HepG2 (cell line): ENCODE measurements at regions of chr22 and their contacts with region 1.

Region 1: DNA sequence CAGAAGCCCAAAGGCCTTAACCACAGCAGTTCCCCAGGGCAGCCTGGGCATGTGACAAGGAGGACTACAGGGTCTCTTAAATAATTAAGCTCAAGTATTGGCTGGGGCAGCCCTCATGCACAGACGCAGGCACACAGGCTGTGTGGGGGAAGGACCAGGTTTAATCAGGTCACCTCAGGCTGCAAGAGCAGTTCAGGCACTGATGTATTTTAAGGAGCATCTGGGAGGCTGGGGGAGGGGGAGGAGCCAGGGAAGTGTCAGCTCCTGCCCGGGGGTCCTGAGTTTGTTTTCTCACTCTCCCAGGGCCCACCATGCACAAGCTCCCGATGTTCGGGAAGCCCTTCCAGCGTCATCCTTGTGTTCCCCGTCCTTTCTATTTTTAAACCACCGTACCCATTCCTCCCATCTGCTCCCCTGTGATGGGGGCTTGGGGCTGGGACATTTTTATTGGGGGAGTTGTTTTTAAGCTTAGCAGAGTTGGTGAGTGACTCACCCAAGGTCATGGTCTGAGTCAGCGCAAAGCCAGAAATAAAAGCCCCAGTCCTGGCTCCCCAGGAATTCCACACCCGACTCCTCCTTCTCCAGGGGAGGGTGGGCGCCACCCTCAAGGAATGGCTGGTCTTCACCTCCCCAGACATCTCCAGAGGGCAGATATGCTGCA is 2.4 kb downstream of the CSDC2 start:
- DNase-seq: peak; percentile 43
- ATAC-seq: no peak
- H3K4me3 ChIP-seq: no peak overlapping the region
- H3K27ac ChIP-seq: no peak overlapping the region
- H3K4me1 ChIP-seq: peaks cover 71% of the 10 kb centered on the region
- H3K27me3 ChIP-seq: peaks cover 0 to 29% of the 10 kb centered on the region in 2 experiments; a peak in 3 of 5 replicates
- CTCF ChIP-seq: no peak
- EP300 ChIP-seq: no peak
- POLR2A ChIP-seq: no peak
- RAD21 ChIP-seq: no peak

Region 2: GRCh38 chr22:41551877-41552582 is 11.2 kb before region 1 on chr22:
- CTCF ChIA-PET with region 1: no interaction called
- POLR2A ChIA-PET with region 1: interaction called, 19 read pairs
- in situ Hi-C with region 1: no loop called
- intact Hi-C with region 1: no loop called
- DNase-seq: no peak
- ATAC-seq: no peak
- H3K4me3 ChIP-seq: peak overlapping the region; percentile 2 to 47 (median 14); a peak in 5 of 6 replicates
- H3K27ac ChIP-seq: peak overlapping the region; percentile 9
- H3K4me1 ChIP-seq: peaks cover 85% of the 10 kb centered on the region
- H3K27me3 ChIP-seq: no peaks in the 10 kb centered on the region; a peak in 2 of 5 replicates
- CTCF ChIP-seq: no peak
- EP300 ChIP-seq: no peak
- POLR2A ChIP-seq: no peak
- RAD21 ChIP-seq: no peak

Region 3: GRCh38 chr22:41648432-41648831 is 85.3 kb after region 1 on chr22:
- CTCF ChIA-PET with region 1: no interaction called
- POLR2A ChIA-PET with region 1: no interaction called
- in situ Hi-C with region 1: no loop called
- intact Hi-C with region 1: no loop called
- DNase-seq: no peak
- ATAC-seq: no peak
- H3K4me3 ChIP-seq: no peak overlapping the region
- H3K27ac ChIP-seq: no peak overlapping the region
- H3K4me1 ChIP-seq: peaks cover 19% of the 10 kb centered on the region
- H3K27me3 ChIP-seq: no peaks in the 10 kb centered on the region; a peak in 1 of 5 replicates
- CTCF ChIP-seq: no peak
- EP300 ChIP-seq: no peak
- POLR2A ChIP-seq: no peak
- RAD21 ChIP-seq: no peak